H1 (cell line): ENCODE measurements at regions of chr17 and their contacts with region 1.

Region 1: DNA sequence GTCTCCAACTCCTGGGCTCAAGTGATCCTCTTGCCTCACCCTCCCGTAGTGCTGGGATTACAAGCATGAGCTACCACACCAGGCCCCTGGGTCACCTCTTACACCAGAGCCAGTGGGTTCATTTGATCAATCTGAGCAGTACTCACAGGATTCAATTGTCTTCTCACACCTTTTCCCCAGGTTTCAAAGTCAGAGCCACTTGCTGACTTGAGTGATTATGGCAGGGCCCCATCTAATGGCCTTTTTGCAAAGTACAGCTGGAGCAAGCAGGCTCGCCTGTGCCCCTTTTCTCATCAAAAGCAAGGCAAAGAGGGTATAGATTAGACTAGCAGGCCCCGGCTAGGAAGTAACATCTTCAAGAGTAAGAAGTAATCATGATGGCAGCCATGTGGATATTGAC is 114.8 kb upstream of the NOL11 start:
- DNase-seq: peak; percentile 21 to 57
- H3K4me3 ChIP-seq: no peak overlapping the region
- H3K27ac ChIP-seq: no peak overlapping the region
- H3K4me1 ChIP-seq: peaks cover 0 to 4% (median 0%) of the 10 kb centered on the region in 4 experiments; a peak in 2 of 7 replicates
- H3K27me3 ChIP-seq: no peaks in the 10 kb centered on the region
- CTCF ChIP-seq: peak; percentile 44 to 84 (median 81)
- EP300 ChIP-seq: no peak
- POLR2A ChIP-seq: no peak
- RAD21 ChIP-seq: peak; percentile 89 to 91

Region 2: DNA sequence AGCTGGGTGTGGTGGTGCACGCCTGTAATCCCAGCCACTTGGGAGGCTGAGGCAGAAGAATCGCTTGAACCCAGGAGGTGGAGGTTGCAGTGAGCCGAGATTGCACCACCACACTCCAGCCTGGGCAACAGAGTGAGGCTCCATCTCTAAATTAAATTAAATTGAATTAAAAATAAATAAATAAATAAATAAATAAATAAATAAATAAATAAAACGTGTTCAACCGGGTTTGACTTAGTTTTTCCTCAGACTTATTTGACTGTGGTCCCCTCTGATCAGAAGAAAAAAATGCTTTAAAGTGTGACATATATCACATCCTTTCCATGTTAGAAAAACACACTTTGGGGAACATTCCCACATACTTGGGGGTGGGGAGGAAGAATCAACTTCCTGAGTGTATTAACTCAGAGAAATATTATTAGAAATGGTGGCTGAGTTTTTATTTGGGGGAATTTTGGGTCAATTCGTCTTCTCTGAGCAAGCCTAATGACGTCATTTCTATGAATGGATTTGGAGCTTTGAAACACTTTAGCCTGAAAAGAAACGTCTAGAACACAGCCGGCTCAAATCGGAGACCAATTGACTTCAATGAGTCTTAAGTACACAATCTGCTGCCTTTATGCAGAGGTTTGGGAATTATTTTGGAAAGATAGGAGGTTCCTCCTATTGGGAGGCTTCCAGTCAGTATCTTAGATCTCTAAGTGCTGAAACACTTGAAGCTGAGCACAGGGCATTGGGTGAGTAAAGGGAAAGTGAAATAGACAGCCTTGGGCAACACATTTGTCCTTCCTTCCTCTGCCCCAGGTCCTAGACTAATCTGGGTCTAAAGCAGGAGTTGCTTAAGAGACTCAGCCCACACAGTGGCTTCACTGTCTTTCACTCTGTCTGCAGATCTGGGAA is 93.3 kb before region 1 on chr17:
- CTCF ChIA-PET with region 1: interaction called, 21 read pairs
- POLR2A ChIA-PET with region 1: no interaction called
- DNase-seq: no peak
- H3K4me3 ChIP-seq: no peak overlapping the region
- H3K27ac ChIP-seq: no peak overlapping the region
- H3K4me1 ChIP-seq: peaks cover 0 to 4% (median 0%) of the 10 kb centered on the region in 4 experiments; a peak in 1 of 7 replicates
- H3K27me3 ChIP-seq: no peaks in the 10 kb centered on the region
- CTCF ChIP-seq: no peak
- EP300 ChIP-seq: no peak
- POLR2A ChIP-seq: no peak
- RAD21 ChIP-seq: no peak

Region 3: GRCh38 chr17:67615011-67615561 is 12.1 kb after region 1 on chr17:
- CTCF ChIA-PET with region 1: interaction called, 11 read pairs
- POLR2A ChIA-PET with region 1: no interaction called
- DNase-seq: no peak
- H3K4me3 ChIP-seq: no peak overlapping the region
- H3K27ac ChIP-seq: no peak overlapping the region
- H3K4me1 ChIP-seq: no peaks in the 10 kb centered on the region; a peak in 1 of 7 replicates
- H3K27me3 ChIP-seq: no peaks in the 10 kb centered on the region
- CTCF ChIP-seq: peak in 2 of 3 experiments; percentile 7 to 14; a peak in 2 of 4 replicates
- EP300 ChIP-seq: no peak
- POLR2A ChIP-seq: no peak
- RAD21 ChIP-seq: no peak; a peak in 1 of 4 replicates

Region 4: GRCh38 chr17:67679225-67679624 is 76.3 kb after region 1 on chr17:
- CTCF ChIA-PET with region 1: no interaction called
- POLR2A ChIA-PET with region 1: no interaction called
- DNase-seq: no peak
- H3K4me3 ChIP-seq: no peak overlapping the region
- H3K27ac ChIP-seq: no peak overlapping the region
- H3K4me1 ChIP-seq: no peaks in the 10 kb centered on the region
- H3K27me3 ChIP-seq: no peaks in the 10 kb centered on the region
- CTCF ChIP-seq: no peak
- EP300 ChIP-seq: no peak
- POLR2A ChIP-seq: no peak
- RAD21 ChIP-seq: no peak

Region 5: GRCh38 chr17:67800495-67800928 is 197.6 kb after region 1 on chr17:
- CTCF ChIA-PET with region 1: no interaction called
- POLR2A ChIA-PET with region 1: no interaction called
- DNase-seq: peak; percentile 59 to 87
- H3K4me3 ChIP-seq: no peak overlapping the region
- H3K27ac ChIP-seq: no peak overlapping the region
- H3K4me1 ChIP-seq: peaks cover 0 to 3% (median 0%) of the 10 kb centered on the region in 4 experiments; a peak in 2 of 7 replicates
- H3K27me3 ChIP-seq: no peaks in the 10 kb centered on the region; a peak in 1 of 7 replicates
- CTCF ChIP-seq: peak; percentile 83 to 88 (median 86)
- EP300 ChIP-seq: no peak
- POLR2A ChIP-seq: no peak
- RAD21 ChIP-seq: peak; percentile 80 to 88